T-cell (primary cell): ENCODE measurements at regions of chr15 and their contacts with region 1.

Region 1: DNA sequence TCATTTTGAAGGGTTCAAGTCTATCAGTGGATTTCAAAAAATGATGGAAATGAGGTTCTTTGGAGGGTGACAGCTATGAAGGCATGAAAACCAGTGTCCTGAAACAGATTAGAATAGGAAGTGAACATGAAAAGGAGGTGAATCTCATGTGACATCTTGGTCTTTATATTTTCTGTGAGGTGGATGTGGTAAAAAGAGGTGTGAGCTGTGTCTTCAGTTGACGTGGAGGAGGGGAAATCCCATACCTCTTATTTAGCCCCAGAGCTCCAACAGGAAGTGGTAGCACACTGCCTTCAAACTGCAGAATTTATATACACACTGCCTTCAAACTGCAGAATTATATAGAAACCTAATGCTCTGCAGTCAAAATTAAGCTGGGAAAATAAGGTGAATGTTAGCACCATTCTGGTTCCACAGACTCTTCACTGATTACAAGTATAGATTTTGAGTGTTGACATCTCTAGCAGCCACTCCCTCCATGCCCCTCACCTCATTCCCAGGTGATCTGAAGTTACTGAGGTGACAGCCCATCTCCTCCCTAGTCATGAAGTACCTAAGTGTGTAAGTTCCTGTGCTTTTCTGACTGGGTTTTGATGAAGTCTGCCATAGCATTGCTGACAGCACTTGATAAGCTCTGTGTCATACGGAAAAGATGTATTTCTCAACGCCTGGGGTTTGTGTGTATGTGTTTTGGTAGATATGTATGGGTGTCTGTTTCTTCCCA is 2.7 kb downstream of the RAB8B start:
- DNase-seq: peak; percentile 16 to 95 (median 63)
- ATAC-seq: peak; percentile 63 to 83 (median 75)
- H3K4me3 ChIP-seq: peak overlapping the region; percentile 56 to 88
- H3K4me3 Mint-ChIP-seq: peak overlapping the region; percentile 74 to 97 (median 81)
- H3K27ac ChIP-seq: peak overlapping the region; percentile 95
- H3K27ac Mint-ChIP-seq: peak overlapping the region; percentile 95 to 97
- H3K4me1 ChIP-seq: peaks cover 51 to 58% of the 10 kb centered on the region in 2 experiments
- H3K4me1 Mint-ChIP-seq: peaks cover 74 to 80% (median 75%) of the 10 kb centered on the region in 3 donors
- H3K27me3 ChIP-seq: no peaks in the 10 kb centered on the region
- H3K27me3 Mint-ChIP-seq: no peaks in the 10 kb centered on the region

Region 2: DNA sequence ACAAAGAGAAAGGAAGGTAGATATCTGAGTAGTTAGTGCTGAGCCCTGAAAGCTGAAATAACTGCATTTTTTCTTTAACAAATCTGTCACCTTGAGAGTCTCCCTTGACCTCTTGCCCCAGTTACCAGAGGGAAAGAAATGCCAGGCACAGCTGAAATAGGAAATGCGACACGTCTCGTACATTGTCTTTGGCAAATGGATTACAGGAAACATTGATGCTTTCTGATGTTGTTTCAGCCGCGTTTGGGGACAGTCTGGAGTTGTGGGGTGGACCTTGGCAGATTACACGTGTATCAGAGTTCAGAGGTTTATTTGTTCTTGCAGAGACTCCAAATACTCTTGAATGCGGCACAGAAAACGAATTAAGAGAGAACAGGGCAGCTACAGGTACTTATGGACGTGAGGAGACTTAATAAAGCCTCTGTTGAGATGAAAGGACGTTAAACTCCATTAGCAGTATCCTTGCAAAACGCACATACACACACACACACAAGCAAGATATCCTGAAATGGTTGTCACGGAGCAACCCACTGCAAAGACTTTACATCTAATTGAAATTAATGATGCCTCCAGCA is 1690.2 kb before region 1 on chr15:
- CTCF ChIA-PET with region 1: no interaction called
- POLR2A ChIA-PET with region 1: no interaction called
- DNase-seq: no peak
- ATAC-seq: no peak
- H3K4me3 ChIP-seq: no peak overlapping the region
- H3K4me3 Mint-ChIP-seq: no peak overlapping the region
- H3K27ac ChIP-seq: no peak overlapping the region
- H3K27ac Mint-ChIP-seq: no peak overlapping the region
- H3K4me1 ChIP-seq: no peaks in the 10 kb centered on the region
- H3K4me1 Mint-ChIP-seq: no peaks in the 10 kb centered on the region
- H3K27me3 ChIP-seq: peaks cover 0 to under 1% of the 10 kb centered on the region in 2 experiments
- H3K27me3 Mint-ChIP-seq: peaks cover 24 to 40% of the 10 kb centered on the region in 2 donors

Region 3: DNA sequence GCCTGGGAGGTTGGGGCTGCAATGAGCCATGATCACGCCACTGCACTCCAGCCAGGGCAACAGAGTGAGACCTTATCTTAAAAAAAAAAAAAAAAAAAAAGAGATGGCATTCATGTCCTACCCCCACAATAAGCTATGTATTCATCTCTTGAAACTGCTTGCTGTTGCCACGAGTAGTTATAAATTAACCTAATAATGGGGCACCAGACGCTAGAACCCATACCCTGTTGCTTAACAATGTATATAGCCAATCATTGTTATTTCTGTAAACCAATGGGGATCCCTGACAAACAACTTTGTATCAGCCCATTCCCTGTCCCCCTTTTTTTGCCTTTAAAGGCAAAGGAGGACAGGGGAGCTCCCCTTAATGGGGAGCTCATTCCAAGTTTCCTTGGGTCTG is 73.2 kb before region 1 on chr15:
- CTCF ChIA-PET with region 1: interaction called in 1 of 2 experiments, 10 read pairs
- POLR2A ChIA-PET with region 1: no interaction called
- DNase-seq: no peak
- ATAC-seq: no peak
- H3K4me3 ChIP-seq: no peak overlapping the region
- H3K4me3 Mint-ChIP-seq: no peak overlapping the region
- H3K27ac ChIP-seq: no peak overlapping the region
- H3K27ac Mint-ChIP-seq: no peak overlapping the region
- H3K4me1 ChIP-seq: peaks cover 4 to 5% of the 10 kb centered on the region in 2 experiments
- H3K4me1 Mint-ChIP-seq: peaks cover 15 to 20% (median 17%) of the 10 kb centered on the region in 3 donors
- H3K27me3 ChIP-seq: no peaks in the 10 kb centered on the region
- H3K27me3 Mint-ChIP-seq: no peaks in the 10 kb centered on the region

Region 4: GRCh38 chr15:63146669-63147068 is 45.4 kb before region 1 on chr15:
- CTCF ChIA-PET with region 1: no interaction called
- POLR2A ChIA-PET with region 1: no interaction called
- DNase-seq: peak in 1 of 35 experiments; percentile 15
- ATAC-seq: no peak
- H3K4me3 ChIP-seq: no peak overlapping the region
- H3K4me3 Mint-ChIP-seq: no peak overlapping the region
- H3K27ac ChIP-seq: no peak overlapping the region
- H3K27ac Mint-ChIP-seq: no peak overlapping the region
- H3K4me1 ChIP-seq: no peaks in the 10 kb centered on the region
- H3K4me1 Mint-ChIP-seq: peaks cover 6 to 18% (median 10%) of the 10 kb centered on the region in 3 donors
- H3K27me3 ChIP-seq: no peaks in the 10 kb centered on the region
- H3K27me3 Mint-ChIP-seq: no peaks in the 10 kb centered on the region

Region 5: DNA sequence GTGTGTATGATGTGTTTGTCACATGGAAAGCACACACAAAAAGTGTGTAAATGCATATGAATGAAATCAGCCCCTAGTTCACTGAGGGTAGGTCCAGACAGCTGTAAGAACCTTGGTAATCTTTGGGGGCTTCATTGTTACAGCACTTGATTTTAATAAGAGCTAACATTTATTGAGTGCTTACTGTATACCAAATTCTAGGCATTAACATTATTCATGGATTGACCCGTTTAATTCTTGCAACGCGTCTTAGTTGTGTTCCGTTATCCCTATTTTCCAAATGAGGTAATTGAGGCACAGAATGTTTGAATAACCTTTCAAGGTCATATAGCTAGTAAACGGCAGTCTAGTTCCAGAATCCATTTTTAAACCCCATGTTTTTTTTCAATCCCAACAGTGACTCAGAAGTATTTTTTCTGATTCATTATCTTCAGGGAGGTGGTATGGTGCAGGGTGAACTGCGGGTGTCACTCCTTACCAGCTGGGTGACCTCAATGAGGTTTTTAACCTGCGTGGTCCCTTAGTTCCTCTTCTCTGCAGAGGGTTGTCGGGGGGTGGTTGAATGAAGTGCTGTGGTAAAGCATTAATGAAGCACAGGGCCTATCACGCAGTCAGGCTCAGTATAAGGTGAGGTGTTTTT is 11.5 kb after region 1 on chr15:
- CTCF ChIA-PET with region 1: interaction called in 1 of 2 experiments, 24 read pairs
- POLR2A ChIA-PET with region 1: interaction called, 6 to 42 read pairs
- DNase-seq: peak in 33 of 35 experiments; percentile 10 to 70 (median 49)
- ATAC-seq: peak; percentile 78 to 91 (median 87)
- H3K4me3 ChIP-seq: no peak overlapping the region
- H3K4me3 Mint-ChIP-seq: peak overlapping the region in 1 of 3 donors; percentile 29
- H3K27ac ChIP-seq: peak overlapping the region; percentile 9
- H3K27ac Mint-ChIP-seq: peak overlapping the region; percentile 60 to 62
- H3K4me1 ChIP-seq: peaks cover 43 to 57% of the 10 kb centered on the region in 2 experiments
- H3K4me1 Mint-ChIP-seq: peaks cover 92 to 94% (median 93%) of the 10 kb centered on the region in 3 donors
- H3K27me3 ChIP-seq: no peaks in the 10 kb centered on the region
- H3K27me3 Mint-ChIP-seq: no peaks in the 10 kb centered on the region

Region 6: DNA sequence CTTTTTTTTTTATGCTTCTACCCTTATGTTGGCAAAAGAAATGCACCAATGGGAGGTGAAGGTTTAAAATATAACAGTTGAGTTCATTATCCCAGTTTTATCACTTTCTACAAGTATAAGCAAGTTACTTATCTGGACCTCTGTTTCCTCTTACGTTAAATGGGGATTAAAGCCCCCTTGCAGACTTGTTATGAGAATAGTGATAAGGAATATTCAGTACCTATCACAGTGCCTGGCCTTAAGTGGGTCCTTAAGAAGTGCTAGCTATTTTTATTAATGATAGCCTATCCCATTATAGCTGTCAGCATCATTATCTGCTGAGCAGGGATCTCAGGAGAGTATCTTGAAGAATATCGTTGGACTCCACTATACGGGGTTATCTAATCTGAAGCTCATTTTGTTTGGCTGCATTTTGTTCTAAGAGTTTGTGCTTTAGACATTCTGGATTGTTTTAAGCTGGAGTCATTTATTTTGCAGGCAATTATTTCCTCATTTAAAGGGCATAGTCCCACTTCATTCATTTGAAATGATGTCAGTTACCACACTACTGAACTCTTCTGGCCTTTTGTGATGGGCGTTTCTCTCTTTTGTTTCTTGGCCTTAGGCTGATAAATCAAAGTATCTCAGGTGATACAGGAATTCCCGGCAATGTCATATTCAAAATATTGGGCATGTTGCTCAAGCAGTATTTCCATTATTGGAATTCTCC is 26.2 kb after region 1 on chr15:
- CTCF ChIA-PET with region 1: interaction called in 1 of 2 experiments, 5 read pairs
- POLR2A ChIA-PET with region 1: interaction called, 3 to 17 read pairs
- DNase-seq: no peak
- ATAC-seq: no peak
- H3K4me3 ChIP-seq: no peak overlapping the region
- H3K4me3 Mint-ChIP-seq: no peak overlapping the region
- H3K27ac ChIP-seq: no peak overlapping the region
- H3K27ac Mint-ChIP-seq: peak overlapping the region; percentile 13 to 66
- H3K4me1 ChIP-seq: peaks cover 3 to 20% of the 10 kb centered on the region in 2 experiments
- H3K4me1 Mint-ChIP-seq: peaks cover 71 to 72% (median 72%) of the 10 kb centered on the region in 3 donors
- H3K27me3 ChIP-seq: no peaks in the 10 kb centered on the region
- H3K27me3 Mint-ChIP-seq: no peaks in the 10 kb centered on the region

Region 7: DNA sequence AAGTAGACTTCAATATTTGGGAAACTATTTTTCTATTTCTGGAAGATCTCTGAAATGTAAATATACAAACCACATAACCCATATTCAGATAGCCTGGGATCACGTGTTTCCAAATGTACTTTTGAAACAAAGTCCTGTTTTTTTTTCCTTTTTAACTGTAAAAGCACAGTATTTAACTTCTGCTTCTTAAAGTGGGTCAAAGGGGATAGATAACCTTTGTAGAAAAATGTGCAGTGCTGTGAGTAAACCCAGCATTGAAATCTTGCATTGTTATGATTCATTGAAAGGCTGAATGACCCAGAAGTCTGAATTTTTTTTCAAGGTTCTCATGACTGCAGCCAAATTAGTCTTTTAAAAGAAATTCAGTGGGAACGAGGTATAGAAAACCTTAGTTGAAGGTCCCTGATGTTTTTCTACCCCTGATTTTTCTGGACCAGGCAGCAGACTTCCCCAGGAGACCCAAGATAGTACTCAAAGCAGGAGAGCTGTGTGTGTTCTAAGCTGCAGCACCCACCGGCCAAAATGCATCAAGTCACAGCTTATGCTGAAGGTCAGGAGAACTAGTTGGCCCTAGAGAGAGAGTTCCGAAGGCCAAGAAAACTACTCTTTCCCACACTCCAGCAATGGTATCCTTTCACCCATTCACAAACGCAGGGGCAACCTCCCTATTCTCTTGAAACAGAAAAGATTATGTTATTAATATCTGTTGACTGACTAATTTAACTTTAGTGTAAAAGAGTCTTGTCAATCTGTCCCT is 41.8 kb after region 1 on chr15:
- CTCF ChIA-PET with region 1: interaction called, 3 to 8 read pairs
- POLR2A ChIA-PET with region 1: interaction called, 8 to 20 read pairs
- DNase-seq: no peak
- ATAC-seq: no peak
- H3K4me3 ChIP-seq: no peak overlapping the region
- H3K4me3 Mint-ChIP-seq: no peak overlapping the region
- H3K27ac ChIP-seq: peak overlapping the region; percentile 79
- H3K27ac Mint-ChIP-seq: peak overlapping the region; percentile 42 to 61
- H3K4me1 ChIP-seq: peaks cover 26 to 32% of the 10 kb centered on the region in 2 experiments
- H3K4me1 Mint-ChIP-seq: peaks cover 81 to 88% (median 82%) of the 10 kb centered on the region in 3 donors
- H3K27me3 ChIP-seq: no peaks in the 10 kb centered on the region
- H3K27me3 Mint-ChIP-seq: no peaks in the 10 kb centered on the region

Region 8: GRCh38 chr15:63256433-63257274 is 64.6 kb after region 1 on chr15:
- CTCF ChIA-PET with region 1: no interaction called
- POLR2A ChIA-PET with region 1: no interaction called
- DNase-seq: no peak
- ATAC-seq: no peak
- H3K4me3 ChIP-seq: no peak overlapping the region
- H3K4me3 Mint-ChIP-seq: no peak overlapping the region
- H3K27ac ChIP-seq: no peak overlapping the region
- H3K27ac Mint-ChIP-seq: peak overlapping the region; percentile 2 to 34
- H3K4me1 ChIP-seq: no peaks in the 10 kb centered on the region
- H3K4me1 Mint-ChIP-seq: peaks cover 9 to 20% (median 13%) of the 10 kb centered on the region in 3 donors
- H3K27me3 ChIP-seq: no peaks in the 10 kb centered on the region
- H3K27me3 Mint-ChIP-seq: no peaks in the 10 kb centered on the region

Region 9: GRCh38 chr15:63426552-63426951 is 234.5 kb after region 1 on chr15:
- CTCF ChIA-PET with region 1: no interaction called
- POLR2A ChIA-PET with region 1: no interaction called
- DNase-seq: no peak
- ATAC-seq: no peak
- H3K4me3 ChIP-seq: no peak overlapping the region
- H3K4me3 Mint-ChIP-seq: no peak overlapping the region
- H3K27ac ChIP-seq: no peak overlapping the region
- H3K27ac Mint-ChIP-seq: no peak overlapping the region
- H3K4me1 ChIP-seq: no peaks in the 10 kb centered on the region
- H3K4me1 Mint-ChIP-seq: no peaks in the 10 kb centered on the region
- H3K27me3 ChIP-seq: no peaks in the 10 kb centered on the region
- H3K27me3 Mint-ChIP-seq: no peaks in the 10 kb centered on the region